Caco-2 (cell line): ENCODE measurements at regions of chr17 and their contacts with region 1.

Region 1: GRCh38 chr17:50210240-50211225 is 9.1 kb upstream of the COL1A1 start:
- DNase-seq: peak; percentile 70 to 93
- H3K4me3 ChIP-seq: no peak overlapping the region
- H3K4me3 Mint-ChIP-seq: peak overlapping the region; percentile 27
- H3K27ac Mint-ChIP-seq: peak overlapping the region; percentile 56
- H3K4me1 ChIP-seq: peaks cover 74% of the 10 kb centered on the region
- H3K4me1 Mint-ChIP-seq: peaks cover 73% of the 10 kb centered on the region
- H3K27me3 ChIP-seq: no peaks in the 10 kb centered on the region
- H3K27me3 Mint-ChIP-seq: no peaks in the 10 kb centered on the region
- CTCF ChIP-seq: no peak

Region 2: GRCh38 chr17:50221864-50222545 is 11.5 kb after region 1 on chr17:
- CTCF ChIA-PET with region 1: interaction called, 4 read pairs
- POLR2A ChIA-PET with region 1: no interaction called
- intact Hi-C with region 1: loop called (anchors 1 kb)
- DNase-seq: peak in 1 of 2 experiments; percentile 32
- H3K4me3 ChIP-seq: no peak overlapping the region
- H3K4me3 Mint-ChIP-seq: no peak overlapping the region
- H3K27ac Mint-ChIP-seq: peak overlapping the region; percentile 17
- H3K4me1 ChIP-seq: peaks cover 38% of the 10 kb centered on the region
- H3K4me1 Mint-ChIP-seq: peaks cover 32% of the 10 kb centered on the region
- H3K27me3 ChIP-seq: no peaks in the 10 kb centered on the region
- H3K27me3 Mint-ChIP-seq: no peaks in the 10 kb centered on the region
- CTCF ChIP-seq: no peak

Region 3: DNA sequence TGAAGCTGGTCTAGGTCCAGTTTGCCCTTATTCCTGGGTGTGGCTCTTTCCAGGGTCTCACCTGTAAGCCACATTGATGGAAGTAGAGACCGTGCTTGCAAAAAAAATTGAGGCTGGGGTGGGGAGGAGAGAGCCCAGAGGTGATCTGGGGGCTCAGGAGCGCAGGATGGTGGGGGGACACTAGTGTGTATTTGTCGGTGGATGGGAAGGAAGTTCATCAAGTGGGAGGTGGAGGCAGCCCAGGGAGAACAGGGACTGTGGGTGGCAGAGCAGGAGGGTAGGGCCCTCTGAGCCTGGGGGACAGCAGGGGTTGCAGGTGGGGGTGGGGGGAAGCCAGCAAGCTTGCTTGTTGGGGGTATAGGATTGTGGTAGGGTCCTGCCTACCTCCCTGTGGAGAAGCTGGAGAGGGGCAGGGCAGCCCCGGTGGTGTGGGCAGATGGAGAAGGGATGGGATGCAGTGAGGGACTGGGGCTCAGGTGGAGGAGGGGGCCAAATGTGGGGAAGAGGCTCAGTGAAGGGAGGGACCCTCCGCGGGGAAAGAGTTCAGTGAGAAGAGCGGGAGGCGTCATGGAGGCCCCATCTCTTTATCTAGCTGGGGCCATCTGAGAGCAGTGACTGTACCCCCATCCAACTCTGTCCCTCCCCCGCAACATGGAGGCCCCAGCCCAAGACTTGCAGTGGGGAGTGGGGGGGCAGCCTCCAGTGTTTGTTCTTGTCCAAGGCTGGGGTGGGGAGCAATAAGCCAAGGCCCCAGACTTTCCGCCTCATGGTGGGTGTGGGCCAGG is 46.5 kb after region 1 on chr17:
- CTCF ChIA-PET with region 1: no interaction called
- POLR2A ChIA-PET with region 1: no interaction called
- intact Hi-C with region 1: no loop called
- DNase-seq: peak in 1 of 2 experiments; percentile 39
- H3K4me3 ChIP-seq: no peak overlapping the region
- H3K4me3 Mint-ChIP-seq: no peak overlapping the region
- H3K27ac Mint-ChIP-seq: no peak overlapping the region
- H3K4me1 ChIP-seq: peaks cover 11% of the 10 kb centered on the region; the same call in 1 of the 2 replicates
- H3K4me1 Mint-ChIP-seq: peaks cover 7% of the 10 kb centered on the region
- H3K27me3 ChIP-seq: no peaks in the 10 kb centered on the region
- H3K27me3 Mint-ChIP-seq: peaks cover 2% of the 10 kb centered on the region
- CTCF ChIP-seq: no peak